Activated CD8-positive, alpha-beta T cell treated with anti-CD3 and anti-CD28 coated beads for 36 hours (primary cell): ENCODE measurements at regions of chr2 and their contacts with region 1.

Region 1: DNA sequence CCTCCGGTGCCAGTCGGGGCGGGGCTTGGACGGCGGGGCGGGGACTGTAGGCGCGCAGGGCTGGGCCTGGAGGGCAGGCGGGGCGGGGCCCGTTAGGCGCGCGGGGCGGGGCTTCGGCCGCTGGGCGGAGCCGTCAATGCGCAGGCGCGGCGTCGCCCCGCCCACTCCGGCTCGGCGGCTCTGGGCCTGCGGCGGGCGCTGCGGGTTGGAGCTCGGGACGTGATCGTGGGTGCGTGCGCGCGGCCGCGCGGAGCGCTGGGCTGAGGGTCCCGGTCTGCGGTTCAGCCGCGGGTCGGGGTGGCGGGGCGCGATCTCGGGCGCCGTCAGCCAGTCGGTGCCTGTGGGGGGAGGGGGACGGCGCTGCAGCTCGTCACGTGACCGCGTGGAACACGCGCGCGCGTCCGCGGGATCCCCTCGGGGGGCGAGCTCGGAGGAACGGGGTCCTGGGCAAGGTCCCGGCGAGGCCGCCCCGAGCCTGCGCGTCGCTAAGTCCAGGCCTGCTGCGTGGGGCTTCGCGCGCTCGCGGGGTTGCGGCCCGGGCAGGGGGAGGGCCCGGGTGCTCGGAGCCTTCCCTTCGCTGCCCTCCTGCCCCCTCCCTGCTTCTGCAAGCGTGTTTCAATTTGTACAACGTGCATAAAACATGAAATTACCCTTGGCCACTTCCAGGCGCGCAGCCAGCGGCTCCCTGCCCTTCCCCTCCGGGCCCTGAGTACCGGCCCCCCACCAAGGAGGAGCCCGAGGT is at the start of gene D2HGDH:
- DNase-seq: peak; percentile 97
- ATAC-seq: peak; percentile 97
- H3K4me3 Mint-ChIP-seq: peak within 1 kb of the TSS; percentile 84
- H3K27ac Mint-ChIP-seq: peak within 1 kb of the TSS; percentile 69
- H3K4me1 Mint-ChIP-seq: peaks cover 53% of the 10 kb centered on the region
- H3K27me3 Mint-ChIP-seq: no peaks in the 10 kb centered on the region
- CTCF ChIP-seq: no peak
- total RNA-seq, gene D2HGDH: 39.4 to 42.6 TPM

Region 2: GRCh38 chr2:241686649-241687425 is 47.8 kb before region 1 on chr2 and contains the start of gene DTYMK:
- CTCF ChIA-PET with region 1: interaction called, 4 read pairs
- POLR2A ChIA-PET with region 1: interaction called, 12 read pairs
- intact Hi-C with region 1: no loop called
- DNase-seq: peak; percentile 97
- ATAC-seq: peak; percentile 97
- H3K4me3 Mint-ChIP-seq: peak within 1 kb of the TSS; percentile 97
- H3K27ac Mint-ChIP-seq: peak within 1 kb of the TSS; percentile 97
- H3K4me1 Mint-ChIP-seq: peaks cover 28% of the 10 kb centered on the region
- H3K27me3 Mint-ChIP-seq: no peaks in the 10 kb centered on the region
- CTCF ChIP-seq: no peak
- total RNA-seq, gene DTYMK: 87.1 to 91.9 TPM

Region 3: GRCh38 chr2:241702132-241703031 is 32.3 kb before region 1 on chr2:
- CTCF ChIA-PET with region 1: interaction called, 16 read pairs
- POLR2A ChIA-PET with region 1: interaction called, 15 read pairs
- intact Hi-C with region 1: no loop called
- DNase-seq: peak; percentile 95
- ATAC-seq: peak; percentile 81
- H3K4me3 Mint-ChIP-seq: peak overlapping the region; percentile 76
- H3K27ac Mint-ChIP-seq: peak overlapping the region; percentile 75
- H3K4me1 Mint-ChIP-seq: peaks cover 35% of the 10 kb centered on the region
- H3K27me3 Mint-ChIP-seq: no peaks in the 10 kb centered on the region
- CTCF ChIP-seq: peak; percentile 80

Region 4: DNA sequence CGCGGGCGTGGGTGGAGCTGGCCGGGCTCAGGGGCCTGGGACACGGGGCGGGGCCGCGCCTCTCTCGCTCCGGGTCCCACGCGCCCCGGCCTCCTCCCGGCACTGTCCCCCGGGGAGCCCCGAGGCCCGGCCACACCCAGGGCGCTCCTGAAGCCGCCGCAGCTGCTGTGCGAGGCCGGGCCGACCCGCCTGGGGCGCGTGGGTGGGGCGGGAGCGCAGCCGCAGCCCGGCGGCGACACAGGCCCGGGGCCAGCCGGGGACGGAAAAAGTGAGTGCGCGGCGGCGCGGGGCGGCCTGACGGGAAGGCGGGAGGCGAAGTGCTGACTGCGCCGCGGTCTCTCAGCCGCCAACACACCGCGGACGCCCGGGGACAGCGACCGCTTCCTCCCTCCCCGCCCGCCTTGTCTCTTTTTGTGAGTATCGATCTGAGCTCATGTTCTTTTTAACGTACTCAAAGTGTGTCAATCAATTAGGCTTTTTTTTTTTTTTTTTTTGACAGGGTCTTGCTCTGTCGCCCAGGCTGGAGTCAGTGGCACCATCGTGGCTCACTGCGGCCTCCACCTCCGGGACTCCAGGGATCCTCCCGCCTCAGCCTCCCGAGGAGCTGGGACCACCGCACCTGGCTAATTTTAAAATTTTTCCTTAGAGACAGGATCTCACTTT is 109.6 kb after region 1 on chr2:
- CTCF ChIA-PET with region 1: no interaction called
- POLR2A ChIA-PET with region 1: no interaction called
- intact Hi-C with region 1: no loop called
- DNase-seq: peak; percentile 91
- ATAC-seq: peak; percentile 82
- H3K4me3 Mint-ChIP-seq: peak overlapping the region; percentile 58
- H3K27ac Mint-ChIP-seq: peak overlapping the region; percentile 75
- H3K4me1 Mint-ChIP-seq: peaks cover 35% of the 10 kb centered on the region
- H3K27me3 Mint-ChIP-seq: peaks cover 4% of the 10 kb centered on the region
- CTCF ChIP-seq: no peak

Region 5: GRCh38 chr2:241859436-241860183 is 125.0 kb after region 1 on chr2:
- CTCF ChIA-PET with region 1: no interaction called
- POLR2A ChIA-PET with region 1: interaction called, 3 read pairs
- intact Hi-C with region 1: loop called (anchors 10 kb)
- DNase-seq: peak; percentile 94
- ATAC-seq: peak; percentile 50
- H3K4me3 Mint-ChIP-seq: peak overlapping the region; percentile 82
- H3K27ac Mint-ChIP-seq: peak overlapping the region; percentile 92
- H3K4me1 Mint-ChIP-seq: peaks cover 63% of the 10 kb centered on the region
- H3K27me3 Mint-ChIP-seq: peaks cover 11% of the 10 kb centered on the region
- CTCF ChIP-seq: peak; percentile 66

Region 6: DNA sequence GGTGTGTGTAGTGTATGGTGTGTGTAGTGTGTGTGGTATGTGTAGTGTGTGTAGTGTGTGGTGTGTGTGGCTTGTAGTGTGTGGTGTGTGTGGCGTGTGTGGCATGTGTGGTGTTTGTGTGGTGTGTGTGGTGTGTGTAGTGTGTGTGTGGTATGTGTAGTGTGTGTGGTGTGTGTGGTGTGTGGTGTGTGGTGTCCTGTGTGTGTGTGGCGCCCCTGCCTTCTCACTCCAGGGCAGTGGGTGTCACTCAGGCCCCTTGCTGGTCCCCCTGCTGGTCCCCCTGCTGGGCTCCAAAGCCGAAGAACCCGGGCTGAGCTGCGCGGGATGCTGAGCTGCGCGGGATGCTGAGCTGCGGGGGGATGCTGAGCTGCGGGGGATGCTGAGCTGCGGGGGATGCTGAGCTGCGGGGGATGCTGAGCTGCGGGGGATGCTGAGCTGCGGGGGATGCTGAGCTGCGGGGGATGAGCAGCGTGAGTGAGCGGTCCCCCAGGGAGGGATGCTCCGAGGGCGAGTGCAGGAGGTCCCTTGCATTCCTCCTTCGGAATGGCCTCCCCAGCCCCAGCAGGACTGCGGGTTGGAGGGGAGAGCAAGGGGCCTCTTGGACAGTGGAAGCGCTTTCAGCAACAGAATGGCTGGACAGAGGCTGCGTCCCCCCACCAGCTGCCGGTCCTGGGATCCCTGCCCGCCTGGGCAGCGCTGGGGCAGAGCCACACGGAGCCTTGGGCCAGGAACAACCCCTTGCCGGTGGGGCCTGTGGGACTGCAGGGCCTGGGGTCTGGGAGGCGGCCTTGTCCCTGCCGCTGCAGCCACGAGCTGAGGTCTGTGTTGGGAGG is 131.5 kb after region 1 on chr2:
- CTCF ChIA-PET with region 1: interaction called, 5 read pairs
- POLR2A ChIA-PET with region 1: interaction called, 11 read pairs
- intact Hi-C with region 1: loop called (anchors 10 kb)
- DNase-seq: peak; percentile 58
- ATAC-seq: no peak
- H3K4me3 Mint-ChIP-seq: no peak overlapping the region
- H3K27ac Mint-ChIP-seq: no peak overlapping the region
- H3K4me1 Mint-ChIP-seq: peaks cover 80% of the 10 kb centered on the region
- H3K27me3 Mint-ChIP-seq: peaks cover 21% of the 10 kb centered on the region
- CTCF ChIP-seq: no peak

Region 7: DNA sequence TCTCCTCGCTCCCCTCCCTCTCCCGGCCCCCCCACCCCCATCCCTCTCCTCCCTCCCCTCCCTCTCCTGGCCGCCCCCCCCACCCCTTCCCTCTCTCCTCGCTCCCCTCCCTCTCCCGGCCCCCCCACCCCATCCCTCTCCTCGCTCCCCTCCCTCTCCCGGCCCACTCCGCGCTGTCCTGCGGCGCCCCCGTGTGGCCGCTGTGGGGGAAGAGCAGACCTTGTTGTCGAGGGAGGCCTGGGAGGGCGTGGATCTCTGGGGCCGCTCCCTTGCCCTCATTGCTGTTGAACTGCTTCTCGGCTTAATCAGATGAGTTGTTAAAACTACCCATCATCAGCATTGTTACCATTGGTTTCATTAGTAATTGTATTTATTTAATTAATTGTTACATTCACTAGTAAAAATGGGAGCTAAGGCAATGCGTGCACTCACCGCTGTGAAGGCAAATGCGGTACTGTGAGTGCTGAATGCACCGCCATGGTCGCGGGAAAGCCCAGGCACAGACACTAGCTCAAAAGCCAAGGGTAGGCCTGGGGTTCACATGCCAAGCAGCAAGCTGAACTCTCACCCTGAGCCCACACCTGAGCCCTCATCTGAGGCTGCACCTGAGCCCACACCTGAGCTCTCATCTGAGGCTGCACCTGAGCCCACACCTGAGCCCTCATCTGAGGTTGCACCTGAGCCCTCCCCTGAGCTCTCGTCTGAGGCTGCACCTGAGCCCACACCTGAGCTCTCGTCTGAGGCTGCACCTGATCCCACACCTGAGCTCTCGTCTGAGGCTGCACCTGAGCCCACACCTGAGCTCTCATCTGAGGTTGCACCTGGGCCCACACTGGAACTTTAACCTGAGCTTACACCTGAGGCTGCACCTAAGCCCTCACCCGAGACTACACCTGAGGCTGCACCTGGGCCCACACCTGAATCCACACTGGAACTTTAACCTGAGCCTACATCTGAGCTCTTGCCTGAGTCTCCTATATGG is 143.6 kb after region 1 on chr2:
- CTCF ChIA-PET with region 1: interaction called, 38 read pairs
- POLR2A ChIA-PET with region 1: interaction called, 6 read pairs
- intact Hi-C with region 1: no loop called
- DNase-seq: peak; percentile 84
- ATAC-seq: no peak
- H3K4me3 Mint-ChIP-seq: no peak overlapping the region
- H3K27ac Mint-ChIP-seq: no peak overlapping the region
- H3K4me1 Mint-ChIP-seq: peaks cover 33% of the 10 kb centered on the region
- H3K27me3 Mint-ChIP-seq: no peaks in the 10 kb centered on the region
- CTCF ChIP-seq: peak; percentile 55